ENCODE measurements at regions of chr15 and their contacts with region 1.

Region 1: GRCh38 chr15:88834211-88834812 is 31.1 kb downstream of the ACAN start:
- DNase-seq: no peak
- ATAC-seq: peak; percentile 58

Region 2: DNA sequence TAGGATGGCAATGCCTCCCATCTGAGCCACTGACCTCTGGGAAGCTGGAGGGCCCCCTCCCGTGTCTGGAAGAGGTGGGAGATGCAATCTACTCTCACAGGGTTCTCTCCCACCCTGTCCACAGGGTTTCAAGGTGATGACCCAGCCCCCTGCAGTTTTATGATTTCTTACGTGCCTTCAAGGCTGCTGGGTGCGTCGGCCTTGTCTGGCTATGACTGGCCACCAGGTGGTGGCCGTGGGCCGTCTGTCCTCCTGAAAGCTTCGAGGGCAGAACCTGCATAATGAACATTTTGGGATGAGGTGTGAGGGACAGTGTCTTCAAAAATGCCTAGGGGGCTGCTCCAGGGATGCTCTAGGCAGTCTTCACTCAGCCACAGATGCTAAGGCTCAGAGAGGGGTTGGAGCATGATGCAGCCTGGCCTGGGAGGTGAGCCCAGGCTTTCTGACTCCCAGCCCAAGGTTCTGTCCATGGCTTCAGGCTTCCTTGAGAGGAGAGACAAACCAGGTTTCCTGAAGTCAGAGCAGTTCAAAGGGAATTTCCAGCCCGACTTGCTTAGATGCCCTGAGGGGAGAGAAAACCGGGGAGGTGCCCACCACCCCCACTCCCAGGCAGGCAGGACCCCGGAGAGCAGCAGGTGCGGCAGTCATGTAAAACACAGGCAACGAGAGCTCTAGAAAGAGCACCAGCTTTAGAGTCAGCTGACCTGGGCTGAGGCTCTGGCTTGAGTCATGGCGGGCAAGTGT is 176.8 kb before region 1 on chr15:
- intact Hi-C with region 1: loop called (anchors 2 kb)
- DNase-seq: no peak
- ATAC-seq: no peak